Right ventricle myocardium inferior (tissue), 1 donor: ENCODE measurements at regions of chrX and their contacts with region 1.

Region 1: DNA sequence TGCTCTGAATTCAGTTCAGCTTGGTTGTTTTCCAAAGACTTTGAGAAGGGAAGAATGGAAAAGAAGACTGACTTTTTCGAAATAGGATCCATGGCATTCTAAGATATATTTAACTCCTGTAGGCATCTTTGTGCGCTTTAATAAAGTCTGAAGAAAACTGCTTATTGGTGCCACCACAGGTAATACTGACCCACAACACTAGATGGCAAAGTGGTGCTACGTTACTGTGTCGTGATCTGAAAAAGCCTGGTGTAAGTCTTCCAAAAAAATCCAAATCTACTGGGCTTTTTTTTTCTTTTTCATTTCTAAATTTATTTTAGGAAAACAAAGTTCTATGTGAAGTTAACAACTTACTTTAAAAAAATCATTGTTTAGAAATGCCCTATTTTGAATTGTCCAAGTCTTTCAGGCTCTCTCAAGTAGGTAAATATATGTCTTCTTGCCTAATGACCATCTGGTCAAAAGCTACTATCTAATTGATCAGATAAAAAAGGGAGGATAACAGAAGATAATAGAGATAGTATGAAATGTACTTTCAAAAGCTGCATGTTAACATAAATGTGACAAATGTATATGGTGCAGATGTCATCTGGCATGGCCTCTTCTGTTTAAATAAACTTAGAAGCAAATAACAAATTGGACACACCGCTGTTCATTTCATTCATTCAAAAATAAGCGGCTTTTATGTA is 47.0 kb upstream of the MID1IP1 start:
- DNase-seq: no peak
- ATAC-seq: no peak

Region 2: DNA sequence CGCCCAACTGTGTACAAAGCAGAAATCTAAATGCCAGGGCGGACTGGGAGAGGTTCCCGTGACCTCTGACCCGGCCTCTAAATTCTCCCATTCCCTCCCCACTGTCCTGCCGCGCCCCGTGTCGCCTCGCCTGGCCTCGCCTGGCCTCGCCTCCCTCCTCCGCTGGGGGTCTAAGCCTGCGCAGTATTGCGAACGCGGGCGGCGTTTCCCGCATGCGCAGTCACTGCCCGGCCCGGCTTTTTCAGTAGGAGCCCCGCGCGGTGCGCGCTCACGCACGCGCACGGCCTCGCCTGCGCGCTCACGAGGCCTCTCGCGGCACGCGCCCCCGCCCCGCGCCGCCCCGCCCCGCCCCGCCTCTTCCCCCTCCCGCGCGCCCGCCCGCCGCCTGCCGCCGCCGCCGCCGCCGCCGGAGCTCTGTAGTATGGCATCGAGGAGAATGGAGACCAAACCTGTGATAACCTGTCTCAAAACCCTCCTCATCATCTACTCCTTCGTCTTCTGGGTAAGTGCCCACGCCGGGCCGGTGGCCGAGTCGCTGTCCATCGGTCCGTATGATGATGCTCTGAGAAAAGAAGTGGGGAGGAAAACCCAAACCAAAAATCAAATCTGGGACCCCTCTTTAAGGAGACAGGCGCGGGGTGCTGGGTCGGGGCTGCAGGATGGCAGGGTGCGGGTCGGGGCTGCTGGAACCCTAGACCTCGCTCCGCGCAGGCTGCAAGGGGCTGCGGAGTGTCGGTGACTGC is 192.9 kb before region 1 on chrX and contains the start of gene TSPAN7:
- intact Hi-C with region 1: no loop called
- DNase-seq: peak; percentile 90
- ATAC-seq: peak; percentile 97
- total RNA-seq, gene TSPAN7: 26.5 TPM

Region 3: DNA sequence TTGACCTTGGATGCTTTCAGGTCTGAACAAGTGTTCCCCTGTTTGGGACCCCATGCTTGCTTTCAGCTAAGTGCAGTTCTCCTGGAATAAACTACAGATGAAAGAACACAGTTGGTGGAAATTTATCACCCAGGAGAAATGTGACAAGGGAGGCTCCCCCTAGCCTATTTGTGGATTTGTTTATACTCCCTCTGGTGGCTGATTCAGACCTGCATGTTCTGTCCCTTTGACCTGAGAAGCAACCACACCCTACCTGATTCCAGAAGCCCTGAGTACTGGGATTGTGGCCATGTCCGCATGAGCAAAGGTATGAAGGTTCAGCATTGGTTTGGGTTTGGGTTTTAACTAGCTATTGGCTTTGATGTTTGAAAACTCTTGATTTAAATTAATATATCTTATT is 487.9 kb after region 1 on chrX:
- intact Hi-C with region 1: loop called (anchors 10 kb)
- DNase-seq: no peak
- ATAC-seq: no peak